Tibial artery (tissue), 4 donors: ENCODE measurements at regions of chr20 and their contacts with region 1.

Region 1: GRCh38 chr20:35146920-35147574 is at the start of gene EDEM2:
- DNase-seq: peak; percentile 92 to 96
- H3K4me3 ChIP-seq: peak within 1 kb of the TSS; percentile 74 to 93
- H3K27ac ChIP-seq: peak within 1 kb of the TSS; percentile 65 to 74
- H3K4me1 ChIP-seq: peaks cover 0 to 17% (median 11%) of the 10 kb centered on the region in 4 donors
- H3K27me3 ChIP-seq: no peaks in the 10 kb centered on the region
- CTCF ChIP-seq: peak in 1 of 2 experiments; percentile 14

Region 2: GRCh38 chr20:35092524-35093266 is 54.4 kb before region 1 on chr20 and contains the start of gene TRPC4AP:
- intact Hi-C with region 1: loop called (anchors 10 kb)
- DNase-seq: peak; percentile 86 to 94
- H3K4me3 ChIP-seq: peak within 1 kb of the TSS; percentile 69 to 88
- H3K27ac ChIP-seq: peak within 1 kb of the TSS; percentile 88 to 93
- H3K4me1 ChIP-seq: peaks cover 0 to 49% (median 17%) of the 10 kb centered on the region in 4 donors
- H3K27me3 ChIP-seq: no peaks in the 10 kb centered on the region
- CTCF ChIP-seq: peak; percentile 96 to 98

Region 3: DNA sequence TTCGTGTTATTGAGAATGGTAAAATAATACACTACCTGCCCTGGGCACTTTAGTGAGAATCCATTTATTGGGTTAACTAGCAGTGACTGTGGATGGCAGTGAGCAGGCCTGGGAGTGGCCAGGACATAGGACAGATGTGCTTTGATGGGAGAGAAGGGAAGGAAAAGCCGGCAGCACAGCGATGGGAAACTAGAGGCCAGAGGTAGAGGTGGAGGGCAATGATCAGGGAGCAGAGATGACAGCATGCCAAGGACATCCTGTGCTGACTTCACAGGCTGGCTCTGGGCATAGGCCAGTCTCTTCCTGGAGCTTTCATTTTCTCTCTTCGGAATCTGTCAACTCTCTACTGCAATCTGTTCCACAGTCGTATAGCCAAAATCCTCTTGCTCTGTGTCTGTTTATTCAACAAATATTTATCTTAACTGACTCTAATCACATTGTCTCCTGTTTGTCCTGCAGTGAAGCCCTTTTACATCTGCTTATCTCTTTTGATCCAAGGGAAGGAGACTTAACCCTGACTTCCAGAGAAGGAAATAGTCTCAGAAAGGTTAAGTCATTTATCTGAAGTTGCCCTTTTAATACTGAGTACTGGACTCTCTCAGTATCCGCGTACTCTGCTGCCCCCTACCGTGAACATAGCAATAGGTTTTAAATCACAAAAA is 61.0 kb after region 1 on chr20:
- intact Hi-C with region 1: loop called (anchors 2 kb)
- DNase-seq: peak; percentile 80 to 86
- H3K4me3 ChIP-seq: peak overlapping the region; percentile 7 to 20
- H3K27ac ChIP-seq: peak overlapping the region; percentile 60 to 77
- H3K4me1 ChIP-seq: peaks cover 0 to 12% (median 7%) of the 10 kb centered on the region in 4 donors
- H3K27me3 ChIP-seq: no peaks in the 10 kb centered on the region
- CTCF ChIP-seq: peak; percentile 76 to 94

Region 4: GRCh38 chr20:35277531-35278395 is 130.7 kb after region 1 on chr20 and contains the start of gene MMP24OS:
- intact Hi-C with region 1: loop called (anchors 10 kb)
- DNase-seq: peak; percentile 86 to 95
- H3K4me3 ChIP-seq: peak within 1 kb of the TSS; percentile 84 to 95
- H3K27ac ChIP-seq: peak within 1 kb of the TSS; percentile 95 to 99
- H3K4me1 ChIP-seq: peaks cover 0 to 39% (median 24%) of the 10 kb centered on the region in 4 donors
- H3K27me3 ChIP-seq: no peaks in the 10 kb centered on the region
- CTCF ChIP-seq: peak in 1 of 2 experiments; percentile 14